IMR-90 (cell line): ENCODE measurements at regions of chr22 and their contacts with region 1.

Region 1: DNA sequence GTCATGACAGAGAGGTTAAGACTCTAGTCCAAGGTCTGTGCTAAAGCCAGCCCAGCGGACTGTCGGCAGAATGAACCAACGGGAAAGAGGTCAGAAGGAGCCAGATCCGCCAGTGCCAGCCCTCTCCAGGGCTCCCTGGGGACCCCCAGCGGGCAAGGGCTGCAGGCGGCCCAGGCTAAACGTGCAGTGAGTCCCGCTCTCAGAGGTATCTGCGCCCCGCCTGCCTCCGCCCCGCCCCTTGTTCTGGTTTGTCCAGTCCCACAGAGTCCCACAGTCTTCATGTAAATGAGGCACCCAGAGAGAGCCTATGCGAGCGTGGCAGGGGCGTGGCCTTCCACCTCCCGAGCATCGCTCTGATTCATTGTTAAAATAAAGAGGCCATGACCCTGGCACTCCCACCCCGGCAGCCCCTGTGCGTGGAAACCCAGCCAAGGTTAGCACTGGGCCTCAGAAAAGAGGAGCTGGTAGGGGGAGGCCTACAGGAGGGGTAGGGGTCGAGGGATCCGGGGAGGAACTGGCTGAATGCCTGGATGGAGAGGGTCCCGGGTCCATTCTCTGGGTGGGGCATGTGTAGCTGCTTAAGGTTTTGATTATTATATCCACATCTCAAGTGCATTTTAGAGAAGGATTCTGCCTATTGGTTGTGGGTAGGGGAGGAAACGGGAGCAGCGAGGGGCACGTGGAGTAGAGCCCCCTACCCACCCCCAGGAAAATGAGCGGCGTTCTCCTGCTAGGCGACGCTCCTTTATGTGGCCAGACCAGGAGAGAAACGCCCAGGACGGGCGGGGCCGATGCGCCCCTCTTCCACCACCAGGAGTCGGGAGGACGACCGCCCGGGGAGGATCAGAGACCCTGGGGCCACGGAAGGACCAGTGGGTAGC is at the start of gene TRIOBP:
- DNase-seq: peak; percentile 91
- ATAC-seq: peak; percentile 100
- H3K4me3 ChIP-seq: peak within 1 kb of the TSS; percentile 22; the same call in 1 of the 2 replicates
- H3K27ac ChIP-seq: no peak within 1 kb of the TSS
- H3K4me1 ChIP-seq: peaks cover 8% of the 10 kb centered on the region
- H3K27me3 ChIP-seq: no peaks in the 10 kb centered on the region
- CTCF ChIP-seq: peak; percentile 53
- POLR2A ChIP-seq: no peak
- RAD21 ChIP-seq: peak; percentile 44
- total RNA-seq, gene TRIOBP: 46.4 and 47.5 TPM in 2 replicates

Region 2: DNA sequence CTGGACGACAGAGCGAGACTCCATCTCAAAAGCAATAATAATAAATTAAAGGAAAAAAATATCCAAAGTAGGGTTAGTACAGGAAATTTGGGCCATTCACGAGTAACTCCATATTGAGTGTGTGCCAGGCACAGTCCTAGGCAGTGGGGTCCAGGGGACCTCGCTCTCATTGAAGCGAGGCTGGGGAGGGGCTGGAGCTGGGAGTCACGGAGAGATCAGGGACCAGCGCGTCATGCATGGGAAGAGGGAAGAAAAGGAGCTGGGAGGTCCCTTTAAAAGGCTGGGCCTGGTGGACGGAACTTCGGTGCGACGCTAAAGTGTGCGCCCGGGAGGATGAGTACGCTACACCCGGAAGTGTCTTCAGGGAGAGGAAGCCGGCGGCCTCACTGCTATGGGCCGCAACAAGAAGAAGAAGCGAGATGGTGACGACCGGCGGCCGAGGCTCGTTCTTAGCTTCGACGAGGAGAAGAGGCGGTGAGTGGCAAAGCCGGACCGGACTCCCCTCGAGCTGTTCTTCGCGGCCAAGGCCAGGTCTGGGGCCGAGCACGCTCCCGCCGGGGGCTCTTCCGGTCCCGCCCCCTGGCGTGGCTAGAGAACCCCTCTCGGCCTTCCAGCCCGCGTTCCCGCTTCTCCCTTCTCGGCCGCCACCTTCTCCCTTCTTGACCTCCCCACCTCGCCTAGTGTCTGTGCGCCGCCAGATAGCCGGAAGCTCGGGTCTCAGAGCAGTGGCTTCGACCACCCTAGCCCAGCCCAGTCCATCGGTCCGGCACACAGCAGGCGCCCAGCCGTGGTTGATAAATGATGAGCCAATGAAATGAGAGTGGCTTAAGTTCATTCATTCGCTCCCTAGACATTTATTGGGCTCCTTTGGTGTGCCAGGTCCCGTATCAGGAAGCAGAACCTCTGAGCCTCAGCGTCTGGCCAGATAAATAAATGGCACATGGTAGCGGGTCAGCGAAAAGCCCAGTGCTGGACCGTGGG is 10.6 kb before region 1 on chr22 and contains the start of gene NOL12:
- CTCF ChIA-PET with region 1: interaction called, 3 read pairs
- POLR2A ChIA-PET with region 1: interaction called, 10 read pairs
- dilution Hi-C with region 1: no loop called
- in situ Hi-C with region 1: no loop called
- intact Hi-C with region 1: no loop called
- DNase-seq: peak; percentile 86
- ATAC-seq: peak; percentile 90
- H3K4me3 ChIP-seq: peak within 1 kb of the TSS; percentile 81
- H3K27ac ChIP-seq: peak within 1 kb of the TSS; percentile 97
- H3K4me1 ChIP-seq: peaks cover 5% of the 10 kb centered on the region
- H3K27me3 ChIP-seq: no peaks in the 10 kb centered on the region
- CTCF ChIP-seq: no peak
- POLR2A ChIP-seq: peak; percentile 67
- RAD21 ChIP-seq: no peak
- total RNA-seq, gene NOL12: 16.0 and 29.7 TPM in 2 replicates

Region 3: GRCh38 chr22:37741312-37741795 is 44.5 kb after region 1 on chr22:
- CTCF ChIA-PET with region 1: no interaction called
- POLR2A ChIA-PET with region 1: no interaction called
- dilution Hi-C with region 1: no loop called
- in situ Hi-C with region 1: no loop called
- intact Hi-C with region 1: loop called (anchors 5 kb)
- DNase-seq: peak; percentile 98
- ATAC-seq: peak; percentile 18
- H3K4me3 ChIP-seq: no peak overlapping the region
- H3K27ac ChIP-seq: peak overlapping the region; percentile 46
- H3K4me1 ChIP-seq: peaks cover 38% of the 10 kb centered on the region
- H3K27me3 ChIP-seq: no peaks in the 10 kb centered on the region
- CTCF ChIP-seq: no peak
- POLR2A ChIP-seq: no peak
- RAD21 ChIP-seq: no peak